ENCODE measurements at regions of chr15 and their contacts with region 1.

Region 1: DNA sequence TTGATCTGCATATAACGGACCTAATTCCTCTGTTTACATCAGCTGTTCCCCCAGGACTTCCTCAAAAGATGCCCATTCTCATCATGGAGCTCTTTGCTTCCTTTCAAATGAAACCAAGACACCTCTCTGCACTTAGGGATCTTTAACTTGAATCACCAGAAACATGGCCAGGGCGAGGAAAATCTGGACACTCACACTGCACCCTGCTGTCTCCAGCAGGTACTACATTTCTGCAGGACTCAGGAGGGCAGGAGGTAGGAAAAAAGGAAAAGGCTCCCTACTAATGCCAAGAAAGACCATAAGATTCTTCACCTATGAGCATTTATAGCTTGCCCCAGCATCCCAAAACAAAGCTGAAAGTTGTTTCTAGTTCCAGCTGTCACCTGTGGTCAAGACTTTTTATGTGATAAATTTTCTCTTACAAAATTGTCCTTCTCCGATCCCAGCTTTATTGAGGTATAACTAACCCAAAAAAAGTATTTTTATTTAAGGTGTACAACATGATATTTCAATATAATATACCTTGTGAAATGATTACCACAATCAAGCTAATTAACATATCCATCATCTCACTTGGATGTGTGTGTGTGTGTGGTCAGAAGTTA is 87.3 kb upstream of the C15orf61 start:
- DNase-seq: peak in 1 of 2 donors; percentile 25
- ATAC-seq: peak; percentile 43 to 68 (median 63)
- H3K4me3 ChIP-seq: no peak overlapping the region
- H3K27ac ChIP-seq: no peak overlapping the region
- H3K4me1 ChIP-seq: no peaks in the 10 kb centered on the region
- H3K27me3 ChIP-seq: no peaks in the 10 kb centered on the region
- CTCF ChIP-seq: peak; percentile 63

Region 2: GRCh38 chr15:66946578-66947164 is 486.9 kb before region 1 on chr15:
- intact Hi-C with region 1: loop called (anchors 5 to 10 kb)
- DNase-seq: peak; percentile 65 to 82
- ATAC-seq: peak; percentile 64 to 92 (median 80)
- H3K4me3 ChIP-seq: no peak overlapping the region
- H3K27ac ChIP-seq: no peak overlapping the region
- H3K4me1 ChIP-seq: peaks cover 4% of the 10 kb centered on the region
- H3K27me3 ChIP-seq: no peaks in the 10 kb centered on the region
- CTCF ChIP-seq: peak; percentile 98

Region 3: DNA sequence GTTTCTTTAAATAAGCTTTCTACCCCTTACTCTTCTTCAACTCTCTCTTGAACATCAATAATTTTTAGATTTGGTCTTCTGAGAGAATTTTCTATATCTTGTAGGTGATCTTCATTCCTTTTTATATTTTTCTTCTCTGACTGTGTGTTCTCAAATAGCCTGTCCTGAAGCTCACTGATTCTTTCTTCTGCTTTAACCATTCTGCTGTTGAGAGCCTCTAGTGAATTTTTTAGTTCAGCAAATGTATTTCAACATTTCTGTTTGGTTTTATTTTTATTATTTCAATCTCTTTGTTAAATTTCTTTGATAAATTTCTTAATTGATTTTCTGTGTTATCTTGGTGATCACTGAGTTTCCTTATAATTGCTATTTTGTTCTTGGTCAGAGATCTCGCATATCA is 159.4 kb before region 1 on chr15:
- intact Hi-C with region 1: no loop called
- DNase-seq: no peak
- ATAC-seq: no peak
- H3K4me3 ChIP-seq: no peak overlapping the region
- H3K27ac ChIP-seq: no peak overlapping the region
- H3K4me1 ChIP-seq: no peaks in the 10 kb centered on the region
- H3K27me3 ChIP-seq: no peaks in the 10 kb centered on the region
- CTCF ChIP-seq: no peak

Region 4: DNA sequence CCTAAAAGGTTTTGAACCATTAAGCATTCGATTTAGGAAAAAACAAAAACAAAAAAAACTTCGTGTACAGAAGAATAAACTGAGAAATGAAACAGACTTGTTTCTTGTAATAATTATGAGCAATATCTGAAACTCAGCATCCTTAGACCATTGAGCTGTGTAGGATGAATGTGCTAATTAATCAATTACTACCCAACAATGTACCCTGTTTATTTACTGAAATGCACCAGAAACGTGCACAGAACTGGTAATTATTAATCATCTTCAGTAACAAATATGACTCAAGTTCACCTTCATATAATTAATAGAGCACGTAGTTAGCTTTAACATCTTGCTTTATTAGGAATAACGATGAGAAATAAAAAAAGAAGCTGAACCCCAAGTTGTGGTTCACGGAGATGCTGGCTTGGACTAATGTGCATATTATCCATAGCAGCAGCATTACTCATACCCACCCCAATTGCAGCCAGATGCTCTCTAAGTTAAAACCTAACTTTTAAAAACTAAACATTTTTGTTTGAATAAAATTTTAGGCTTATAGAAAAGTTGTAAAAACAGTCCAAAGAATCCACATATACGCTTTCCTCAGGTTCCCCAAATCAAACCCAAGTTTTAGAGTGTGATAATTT is 77.1 kb after region 1 on chr15:
- intact Hi-C with region 1: no loop called
- DNase-seq: no peak
- ATAC-seq: no peak
- H3K4me3 ChIP-seq: no peak overlapping the region
- H3K27ac ChIP-seq: no peak overlapping the region
- H3K4me1 ChIP-seq: no peaks in the 10 kb centered on the region
- H3K27me3 ChIP-seq: no peaks in the 10 kb centered on the region
- CTCF ChIP-seq: no peak

Region 5: DNA sequence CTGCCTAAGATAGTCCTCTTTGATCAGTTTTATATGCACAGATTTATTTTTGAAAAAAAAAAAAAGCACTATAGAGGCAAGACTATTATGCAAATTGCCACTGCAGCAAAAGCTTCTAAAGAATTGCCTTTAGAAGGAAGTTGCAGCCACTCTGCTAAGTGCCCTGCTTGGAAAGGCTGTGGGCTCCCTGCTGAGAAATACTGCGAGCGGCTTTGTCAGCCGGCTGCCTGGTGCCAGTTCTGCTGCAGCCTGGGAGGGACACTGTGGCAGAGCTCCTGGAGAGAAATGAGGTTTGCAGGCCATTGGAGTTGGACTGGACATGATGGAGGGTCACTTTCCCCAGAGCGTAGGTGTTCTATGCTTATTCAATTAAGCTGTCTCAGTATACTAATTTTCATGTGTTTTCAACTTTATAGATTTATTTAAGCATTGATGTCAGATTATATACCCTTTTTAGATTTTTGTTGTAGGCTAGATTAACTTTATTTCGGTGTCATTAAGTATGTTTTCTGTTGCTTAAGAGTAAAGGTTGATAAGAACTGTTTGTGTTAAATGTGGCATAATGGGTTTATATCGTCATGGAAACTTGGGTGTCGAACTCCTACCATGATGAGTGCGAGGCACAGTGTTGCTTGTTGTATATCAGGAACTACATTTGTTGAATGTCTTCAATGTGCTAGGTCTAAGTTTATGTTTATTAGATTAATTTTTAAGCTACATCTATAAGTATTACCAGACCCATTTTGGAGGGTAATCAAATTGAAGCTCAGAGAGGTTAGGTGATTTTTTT is 115.5 kb after region 1 on chr15:
- intact Hi-C with region 1: no loop called
- DNase-seq: no peak
- ATAC-seq: peak; percentile 59 to 77 (median 64)
- H3K4me3 ChIP-seq: no peak overlapping the region
- H3K27ac ChIP-seq: peak overlapping the region; percentile 53
- H3K4me1 ChIP-seq: peaks cover 32% of the 10 kb centered on the region
- H3K27me3 ChIP-seq: no peaks in the 10 kb centered on the region
- CTCF ChIP-seq: no peak

Measured in psoas muscle (tissue), 8 donors.